ENCODE measurements at regions of chr3 and their contacts with region 1.

Region 1: GRCh38 chr3:45224824-45225464 is 1.1 kb downstream of the TMEM158 start:
- DNase-seq: peak; percentile 50
- H3K4me3 ChIP-seq: peak overlapping the region; percentile 97
- H3K27ac ChIP-seq: peak overlapping the region; percentile 80
- H3K27me3 ChIP-seq: no peaks in the 10 kb centered on the region
- CTCF ChIP-seq: peak; percentile 51

Region 2: DNA sequence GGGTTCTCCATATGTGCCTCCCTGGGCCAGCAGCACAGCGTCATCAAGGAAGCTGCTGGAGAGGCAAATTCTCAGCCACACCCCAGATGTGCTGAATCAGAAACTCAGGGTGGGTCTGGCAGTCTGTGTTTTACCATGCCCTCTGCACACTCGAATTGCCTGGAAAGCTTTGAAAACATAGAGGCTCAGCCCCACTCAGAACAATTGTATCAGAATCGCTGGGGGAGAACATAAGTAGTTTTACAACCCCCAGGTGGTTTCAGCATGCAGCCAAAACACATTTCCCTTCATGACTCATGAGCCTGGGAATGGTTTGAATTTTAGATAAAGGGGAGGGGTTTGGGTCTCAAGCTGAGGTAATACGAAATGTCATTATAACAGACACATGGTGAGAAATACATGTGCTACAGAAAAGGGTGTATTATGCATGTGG is 340.9 kb before region 1 on chr3:
- CTCF ChIA-PET with region 1: no interaction called
- POLR2A ChIA-PET with region 1: no interaction called
- DNase-seq: peak; percentile 77
- H3K4me3 ChIP-seq: no peak overlapping the region
- H3K27ac ChIP-seq: peak overlapping the region; percentile 92
- H3K27me3 ChIP-seq: no peaks in the 10 kb centered on the region
- CTCF ChIP-seq: no peak

Region 3: GRCh38 chr3:45037734-45038455 is 187.0 kb before region 1 on chr3:
- CTCF ChIA-PET with region 1: interaction called, 128 read pairs
- POLR2A ChIA-PET with region 1: interaction called, 3 read pairs
- DNase-seq: peak; percentile 87
- H3K4me3 ChIP-seq: no peak overlapping the region
- H3K27ac ChIP-seq: no peak overlapping the region
- H3K27me3 ChIP-seq: no peaks in the 10 kb centered on the region
- CTCF ChIP-seq: peak; percentile 89

Region 4: GRCh38 chr3:45210308-45211041 is 14.5 kb before region 1 on chr3:
- CTCF ChIA-PET with region 1: interaction called, 16 read pairs
- POLR2A ChIA-PET with region 1: no interaction called
- DNase-seq: peak; percentile 63
- H3K4me3 ChIP-seq: no peak overlapping the region
- H3K27ac ChIP-seq: no peak overlapping the region
- H3K27me3 ChIP-seq: no peaks in the 10 kb centered on the region
- CTCF ChIP-seq: peak; percentile 84

Region 5: DNA sequence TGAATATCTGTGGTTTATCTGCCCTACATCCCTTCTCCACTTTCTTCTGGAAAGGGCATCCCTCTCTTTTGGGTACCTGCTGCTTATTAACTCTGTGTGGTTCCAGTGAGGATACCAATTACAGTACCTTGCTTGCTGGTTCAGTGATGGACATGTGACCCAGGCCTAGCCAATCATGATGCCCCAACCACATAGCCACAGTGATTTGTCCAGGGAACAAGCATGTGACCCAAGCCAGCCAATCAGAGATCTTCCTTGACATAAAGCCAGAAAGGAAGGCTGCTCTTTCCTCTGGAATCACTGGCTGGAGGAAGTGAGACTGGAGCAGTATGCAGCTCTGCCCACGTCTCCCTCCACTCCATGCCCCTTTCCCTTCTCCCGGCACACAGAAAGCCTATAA is 12.0 kb after region 1 on chr3:
- CTCF ChIA-PET with region 1: interaction called, 12 read pairs
- POLR2A ChIA-PET with region 1: no interaction called
- DNase-seq: no peak
- H3K4me3 ChIP-seq: no peak overlapping the region
- H3K27ac ChIP-seq: no peak overlapping the region
- H3K27me3 ChIP-seq: peaks cover 4% of the 10 kb centered on the region
- CTCF ChIP-seq: no peak

Region 6: DNA sequence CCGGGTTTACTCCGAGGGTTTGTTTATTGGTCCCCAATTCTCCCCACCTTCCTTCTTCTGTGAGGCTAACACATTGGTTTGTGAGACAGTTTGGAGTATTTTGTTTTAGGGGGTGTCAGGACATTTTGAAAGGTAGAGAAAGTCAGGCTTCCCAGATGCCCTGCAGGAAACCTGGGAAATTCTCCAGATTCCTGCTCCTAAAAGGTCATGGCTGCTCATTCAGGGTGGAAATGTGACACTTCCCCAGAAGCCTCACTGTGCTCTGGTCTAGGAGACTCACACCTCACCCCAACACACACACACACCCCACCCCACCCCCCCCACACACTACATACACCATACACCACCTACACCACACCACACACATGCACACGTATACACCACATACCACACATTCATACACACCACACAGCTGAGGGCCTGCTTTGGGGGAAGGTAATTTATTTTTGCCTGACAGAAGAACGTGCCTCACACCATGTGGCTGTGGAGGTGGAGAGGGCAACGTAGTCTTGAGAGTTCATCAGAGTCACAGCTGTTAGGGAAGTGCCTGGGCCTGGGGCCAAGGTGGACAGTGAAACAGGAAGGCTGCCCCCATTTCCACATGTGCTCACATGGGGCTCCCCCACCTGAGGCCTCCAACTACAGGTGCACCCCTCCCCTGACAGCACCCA is 329.2 kb after region 1 on chr3:
- CTCF ChIA-PET with region 1: no interaction called
- POLR2A ChIA-PET with region 1: no interaction called
- DNase-seq: no peak
- H3K4me3 ChIP-seq: no peak overlapping the region
- H3K27ac ChIP-seq: peak overlapping the region; percentile 81
- H3K27me3 ChIP-seq: no peaks in the 10 kb centered on the region
- CTCF ChIP-seq: no peak